ENCODE measurements at regions of chr21 and their contacts with region 1.

Region 1: GRCh38 chr21:33199516-33200217 is 30.1 kb upstream of the IFNAR2 start:
- DNase-seq: peak; percentile 74
- CTCF ChIP-seq: peak; percentile 65

Region 2: GRCh38 chr21:33441489-33442477 is 242.1 kb after region 1 on chr21:
- in situ Hi-C with region 1: loop called (anchors 5 kb)
- DNase-seq: peak; percentile 72
- CTCF ChIP-seq: no peak

Region 3: DNA sequence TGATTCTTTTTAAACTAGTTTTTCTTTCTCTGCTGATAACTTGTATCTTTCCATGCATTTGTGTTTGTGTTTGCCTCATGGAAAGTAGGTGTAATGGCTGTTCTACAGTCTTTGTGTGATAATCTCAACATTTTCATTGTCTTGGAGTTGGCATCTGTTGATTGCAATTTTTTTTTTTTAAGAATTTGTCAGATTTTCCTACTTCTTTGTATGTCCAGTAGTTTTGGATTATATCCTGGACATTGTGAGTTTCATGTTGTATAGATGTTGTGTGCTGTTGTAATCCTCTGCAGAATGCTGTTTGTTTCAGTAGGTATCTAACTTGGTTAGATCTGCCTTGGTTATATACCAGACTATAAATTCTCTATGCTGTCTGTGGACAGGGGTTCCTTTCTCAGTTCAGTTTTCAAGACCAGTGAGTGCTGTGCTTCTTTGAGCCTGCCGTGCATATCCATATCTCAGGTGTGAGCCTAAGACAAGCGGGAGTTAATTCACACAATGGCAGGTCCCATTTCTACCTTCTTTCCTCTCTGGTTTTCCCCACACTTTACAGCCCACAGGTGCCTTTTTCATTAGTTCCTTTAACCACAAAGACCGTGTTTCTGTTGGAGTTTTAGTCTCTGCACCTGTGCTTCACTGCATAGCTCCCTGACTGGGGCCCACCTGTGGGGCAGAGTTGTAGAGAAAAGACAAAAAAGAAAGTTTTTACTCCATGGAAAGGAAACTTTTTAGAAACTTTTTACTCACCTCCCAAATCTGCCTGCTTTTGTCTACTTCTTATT is 512.5 kb after region 1 on chr21:
- in situ Hi-C with region 1: no loop called
- DNase-seq: no peak
- CTCF ChIP-seq: no peak

Measured in GM13976 (cell line).